Ascending aorta (tissue), 2 donors: ENCODE measurements at regions of chr2 and their contacts with region 1.

Region 1: GRCh38 chr2:109128048-109128465 is 948 bp upstream of the SH3RF3 start:
- DNase-seq: peak in 1 of 2 donors; percentile 91
- H3K4me3 ChIP-seq: peak overlapping the region; percentile 67 to 72
- H3K27ac ChIP-seq: peak overlapping the region; percentile 76 to 85
- H3K4me1 ChIP-seq: peaks cover 4 to 21% of the 10 kb centered on the region in 2 donors
- H3K27me3 ChIP-seq: no peaks in the 10 kb centered on the region
- CTCF ChIP-seq: peak; percentile 90 to 93 (median 92)

Region 2: DNA sequence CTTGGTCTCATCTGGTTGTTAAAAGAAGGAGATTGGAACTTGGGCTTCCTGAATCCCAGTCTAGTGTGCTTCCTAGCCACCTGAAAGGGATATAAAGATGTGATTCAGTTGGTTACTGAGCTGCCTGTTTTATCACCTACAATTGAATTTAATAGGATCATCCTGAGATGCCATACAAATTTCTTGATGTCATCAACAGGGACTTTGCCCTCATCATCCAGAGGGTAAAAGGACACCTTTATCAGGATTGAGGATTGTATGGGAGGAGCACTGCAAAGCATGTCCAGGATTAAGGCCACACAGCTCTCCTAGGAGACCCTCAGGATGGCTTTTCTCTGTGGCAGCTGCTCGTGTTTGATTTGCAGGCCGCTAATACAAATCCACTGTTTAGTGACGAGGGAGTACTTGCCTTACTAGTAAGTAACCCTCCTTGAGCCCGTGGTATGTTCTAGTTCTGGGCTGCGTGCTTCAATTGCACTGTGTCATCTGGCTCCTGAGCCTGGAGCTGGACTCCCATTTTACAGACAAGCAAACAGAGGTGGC is 29.6 kb after region 1 on chr2:
- intact Hi-C with region 1: loop called (anchors 2 kb)
- DNase-seq: no peak
- H3K4me3 ChIP-seq: no peak overlapping the region
- H3K27ac ChIP-seq: no peak overlapping the region
- H3K4me1 ChIP-seq: peaks cover 0 to 14% of the 10 kb centered on the region in 2 donors
- H3K27me3 ChIP-seq: no peaks in the 10 kb centered on the region
- CTCF ChIP-seq: no peak

Region 3: DNA sequence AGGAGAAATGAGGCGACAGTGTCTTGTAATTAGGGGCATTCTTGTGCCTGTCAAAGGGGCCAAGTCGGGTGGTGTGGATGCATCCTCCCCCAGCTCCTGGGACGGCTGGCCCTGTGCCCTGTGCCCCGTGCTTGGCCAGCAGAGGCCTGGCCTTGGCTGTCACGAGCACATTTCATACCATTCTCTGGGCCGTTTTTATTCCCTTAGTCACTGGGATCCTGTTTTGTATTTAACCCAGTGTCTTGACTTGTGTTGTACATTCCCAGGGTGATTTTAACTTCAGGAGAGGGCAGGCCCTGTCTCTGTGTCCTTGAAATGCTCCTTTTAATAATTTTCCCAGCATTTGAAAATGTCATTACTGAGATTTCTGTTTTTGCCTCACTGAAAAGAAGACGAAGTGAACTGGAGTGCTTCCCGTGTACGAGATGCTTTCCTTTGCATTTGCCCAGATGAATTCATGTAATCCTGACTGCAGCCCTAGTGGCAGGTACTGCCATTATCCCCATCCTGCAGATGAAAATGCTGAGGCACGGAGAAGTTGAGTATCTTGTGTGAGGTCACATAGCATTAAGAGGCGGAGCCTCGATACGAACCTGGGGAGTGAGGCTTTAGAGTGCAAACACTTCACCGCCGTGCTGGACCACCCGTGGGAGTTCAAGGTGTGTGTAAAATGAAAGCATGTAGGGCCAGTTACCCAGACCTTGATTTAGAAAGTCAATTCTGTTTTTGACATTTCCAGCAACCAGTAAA is 57.9 kb after region 1 on chr2:
- intact Hi-C with region 1: no loop called
- DNase-seq: peak in 1 of 2 donors; percentile 88
- H3K4me3 ChIP-seq: peak overlapping the region; percentile 8 to 9
- H3K27ac ChIP-seq: peak overlapping the region; percentile 74 to 76
- H3K4me1 ChIP-seq: peaks cover 12 to 40% of the 10 kb centered on the region in 2 donors
- H3K27me3 ChIP-seq: no peaks in the 10 kb centered on the region
- CTCF ChIP-seq: no peak

Region 4: GRCh38 chr2:109201465-109202327 is 73.6 kb after region 1 on chr2:
- intact Hi-C with region 1: loop called (anchors 1 kb)
- DNase-seq: peak in 1 of 2 donors; percentile 81
- H3K4me3 ChIP-seq: peak overlapping the region in 1 of 2 donors; percentile 42
- H3K27ac ChIP-seq: peak overlapping the region; percentile 75 to 81
- H3K4me1 ChIP-seq: peaks cover 20 to 34% of the 10 kb centered on the region in 2 donors
- H3K27me3 ChIP-seq: no peaks in the 10 kb centered on the region
- CTCF ChIP-seq: peak; percentile 30 to 51 (median 41)

Region 5: DNA sequence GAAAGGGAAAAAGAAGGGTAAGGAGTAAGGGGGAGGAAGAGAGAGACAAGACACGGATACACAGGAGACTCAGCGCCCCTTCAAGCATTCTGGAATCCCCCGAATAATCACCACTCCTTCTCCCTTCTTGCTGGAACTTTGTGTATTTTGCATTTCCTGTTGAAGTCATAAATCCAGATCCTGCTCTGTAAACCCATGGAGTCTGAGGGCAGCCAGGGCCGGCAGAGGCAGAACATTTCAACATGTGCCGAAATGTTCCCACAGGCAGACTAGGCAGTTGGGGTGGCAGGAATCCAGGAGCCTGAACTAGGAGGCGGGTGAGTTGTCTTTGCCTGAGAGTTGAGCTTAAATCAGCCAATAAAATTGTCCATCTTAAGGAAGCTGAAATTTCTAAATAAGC is 194.1 kb after region 1 on chr2:
- intact Hi-C with region 1: loop called (anchors 1 kb)
- DNase-seq: peak; percentile 80 to 98
- H3K4me3 ChIP-seq: peak overlapping the region in 1 of 2 donors; percentile 17
- H3K27ac ChIP-seq: peak overlapping the region; percentile 86 to 88
- H3K4me1 ChIP-seq: peaks cover 30 to 67% of the 10 kb centered on the region in 2 donors
- H3K27me3 ChIP-seq: no peaks in the 10 kb centered on the region
- CTCF ChIP-seq: no peak

Region 6: DNA sequence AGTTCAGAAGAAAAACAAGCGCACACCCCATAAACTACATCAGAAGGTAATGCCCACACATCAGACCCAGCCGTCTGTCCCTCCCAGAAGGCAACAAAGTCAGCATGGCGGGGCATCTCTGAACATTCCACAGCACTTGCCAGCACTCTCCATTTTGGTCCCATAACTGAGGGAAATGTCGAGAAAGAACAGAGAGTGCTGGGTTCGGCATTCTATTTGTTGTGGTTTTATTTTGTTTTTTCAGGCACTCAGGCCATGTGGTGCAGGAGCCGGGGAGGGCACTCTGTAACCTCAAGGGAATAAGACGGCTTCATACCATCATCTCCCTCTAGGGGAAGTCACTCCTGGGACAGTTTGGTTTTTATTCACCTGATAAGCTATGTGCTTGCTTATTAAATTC is 329.7 kb after region 1 on chr2:
- intact Hi-C with region 1: loop called (anchors 5 kb)
- DNase-seq: peak in 1 of 2 donors; percentile 66
- H3K4me3 ChIP-seq: no peak overlapping the region
- H3K27ac ChIP-seq: peak overlapping the region; percentile 28 to 50
- H3K4me1 ChIP-seq: peaks cover 9 to 32% of the 10 kb centered on the region in 2 donors
- H3K27me3 ChIP-seq: no peaks in the 10 kb centered on the region
- CTCF ChIP-seq: peak in 1 of 3 experiments; percentile 12